Activated CD4-positive, alpha-beta T cell treated with anti-CD3 and anti-CD28 coated beads, Interleukin-2, amount 10 ng/mL, durations not matched to agents 24 days and 14 days (primary cell): ENCODE measurements at regions of chr2 and their contacts with region 1.

Region 1: GRCh38 chr2:223936862-223937326 is 8.2 kb downstream of the WDFY1 start:
- DNase-seq: no peak
- H3K4me3 Mint-ChIP-seq: peak overlapping the region; percentile 48
- H3K27ac Mint-ChIP-seq: peak overlapping the region; percentile 62
- H3K4me1 Mint-ChIP-seq: peaks cover 61% of the 10 kb centered on the region
- H3K27me3 Mint-ChIP-seq: no peaks in the 10 kb centered on the region

Region 2: DNA sequence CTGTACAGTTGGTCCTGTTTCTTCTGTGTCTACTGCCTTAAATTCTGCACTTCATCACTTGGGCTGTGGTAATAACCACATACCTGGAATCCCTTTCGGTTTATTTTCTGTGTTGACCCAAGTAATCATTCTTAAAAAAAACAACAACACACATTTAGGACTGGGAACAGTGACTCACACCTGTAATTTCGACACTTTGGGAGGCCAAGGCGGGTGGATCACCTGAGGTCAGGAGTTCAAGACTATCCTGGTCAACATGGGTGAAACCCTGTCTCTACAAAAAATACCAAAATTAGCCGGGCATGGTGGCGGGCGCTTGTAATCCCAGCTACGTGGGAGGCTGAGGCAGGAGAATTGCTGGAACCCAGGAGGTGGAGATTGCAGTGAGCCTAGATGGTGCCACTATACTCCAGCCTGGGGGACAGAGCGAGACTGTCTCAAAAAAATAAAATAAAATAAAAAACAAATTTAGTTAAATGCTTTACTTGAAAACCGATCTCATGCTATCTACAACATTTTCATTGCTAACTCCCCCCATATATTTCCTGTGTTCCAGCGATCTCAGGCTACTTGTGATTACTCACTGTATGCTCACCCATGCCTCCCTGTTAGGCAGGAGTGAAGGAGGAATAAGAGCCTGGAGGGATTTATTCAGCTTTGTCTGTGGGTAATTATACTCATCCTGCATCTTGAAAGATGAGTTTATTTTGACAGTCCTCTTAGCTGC is 1057.9 kb before region 1 on chr2:
- intact Hi-C with region 1: no loop called
- DNase-seq: no peak
- H3K4me3 Mint-ChIP-seq: no peak overlapping the region
- H3K27ac Mint-ChIP-seq: no peak overlapping the region
- H3K4me1 Mint-ChIP-seq: peaks cover 12% of the 10 kb centered on the region
- H3K27me3 Mint-ChIP-seq: no peaks in the 10 kb centered on the region

Region 3: DNA sequence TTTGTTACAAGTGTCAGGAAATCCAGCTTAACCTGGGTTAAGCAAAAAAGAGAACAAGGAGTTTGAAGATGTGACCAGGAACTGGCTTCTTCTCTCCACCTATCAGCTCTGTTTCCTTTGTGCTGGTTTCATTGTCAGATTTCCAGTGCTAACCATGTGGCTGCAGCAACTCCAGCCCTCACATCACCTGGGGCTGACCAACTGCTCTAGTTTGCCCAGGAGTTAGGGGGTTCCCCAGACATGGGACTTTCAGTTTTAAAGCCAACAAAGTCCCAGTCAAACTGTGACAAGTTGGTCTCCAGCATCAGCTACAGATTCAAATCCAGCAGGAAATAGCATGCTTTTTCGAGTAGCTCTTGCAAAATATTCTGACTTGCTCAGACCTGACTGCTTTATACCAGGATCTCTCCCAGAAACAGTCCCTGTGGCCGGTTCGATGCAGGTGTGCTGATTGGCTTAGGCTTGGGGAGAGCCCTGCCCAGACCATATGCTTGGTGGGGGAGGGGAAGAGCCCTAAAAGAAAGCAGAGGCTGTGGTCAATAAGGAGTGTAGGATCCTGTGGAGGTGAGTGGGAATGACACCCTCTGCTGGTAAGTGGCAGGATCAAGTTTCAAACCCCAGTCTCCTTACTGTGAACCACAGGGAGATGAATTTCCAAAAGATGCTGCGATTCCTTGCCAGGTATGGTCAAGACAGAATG is 835.4 kb before region 1 on chr2:
- intact Hi-C with region 1: no loop called
- DNase-seq: no peak
- H3K4me3 Mint-ChIP-seq: no peak overlapping the region
- H3K27ac Mint-ChIP-seq: no peak overlapping the region
- H3K4me1 Mint-ChIP-seq: no peaks in the 10 kb centered on the region
- H3K27me3 Mint-ChIP-seq: no peaks in the 10 kb centered on the region

Region 4: DNA sequence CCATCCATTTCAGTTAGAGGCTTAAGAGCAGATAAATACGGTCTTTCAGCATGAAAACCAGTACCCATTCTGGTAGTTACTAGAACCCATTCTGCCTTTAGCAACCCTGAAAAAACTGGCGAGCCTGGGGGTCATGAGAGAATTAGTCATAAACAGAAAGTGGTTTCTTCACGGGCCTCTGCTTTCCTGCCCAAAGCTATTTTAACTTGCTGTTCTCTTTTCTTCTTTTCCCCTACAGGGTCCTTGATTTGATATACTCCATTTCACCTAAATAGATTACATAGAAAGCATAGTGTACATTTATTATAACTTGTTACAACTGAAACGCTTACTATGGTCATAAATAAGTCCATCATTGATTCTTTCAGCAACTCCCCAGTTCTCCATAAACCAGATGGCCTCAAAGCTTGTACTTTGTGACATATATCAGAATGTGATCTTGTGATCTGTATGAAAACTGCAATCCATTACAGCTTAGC is 40.0 kb before region 1 on chr2:
- intact Hi-C with region 1: loop called (anchors 2 kb)
- DNase-seq: no peak
- H3K4me3 Mint-ChIP-seq: peak overlapping the region; percentile 42
- H3K27ac Mint-ChIP-seq: peak overlapping the region; percentile 76
- H3K4me1 Mint-ChIP-seq: peaks cover 15% of the 10 kb centered on the region
- H3K27me3 Mint-ChIP-seq: no peaks in the 10 kb centered on the region

Region 5: GRCh38 chr2:223923976-223924375 is 12.9 kb before region 1 on chr2:
- intact Hi-C with region 1: loop called (anchors 1 kb)
- DNase-seq: no peak
- H3K4me3 Mint-ChIP-seq: no peak overlapping the region
- H3K27ac Mint-ChIP-seq: no peak overlapping the region
- H3K4me1 Mint-ChIP-seq: peaks cover 26% of the 10 kb centered on the region
- H3K27me3 Mint-ChIP-seq: no peaks in the 10 kb centered on the region